ENCODE measurements at regions of chr17 and their contacts with region 1.

Region 1: GRCh38 chr17:75319904-75320691 is 30.9 kb upstream of the SLC25A19 start:
- DNase-seq: no peak
- H3K4me3 ChIP-seq: no peak overlapping the region
- H3K27ac ChIP-seq: no peak overlapping the region
- H3K4me1 ChIP-seq: no peaks in the 10 kb centered on the region
- H3K27me3 ChIP-seq: no peaks in the 10 kb centered on the region
- CTCF ChIP-seq: no peak
- EP300 ChIP-seq: no peak; a peak in 1 of 4 replicates
- RAD21 ChIP-seq: no peak

Region 2: DNA sequence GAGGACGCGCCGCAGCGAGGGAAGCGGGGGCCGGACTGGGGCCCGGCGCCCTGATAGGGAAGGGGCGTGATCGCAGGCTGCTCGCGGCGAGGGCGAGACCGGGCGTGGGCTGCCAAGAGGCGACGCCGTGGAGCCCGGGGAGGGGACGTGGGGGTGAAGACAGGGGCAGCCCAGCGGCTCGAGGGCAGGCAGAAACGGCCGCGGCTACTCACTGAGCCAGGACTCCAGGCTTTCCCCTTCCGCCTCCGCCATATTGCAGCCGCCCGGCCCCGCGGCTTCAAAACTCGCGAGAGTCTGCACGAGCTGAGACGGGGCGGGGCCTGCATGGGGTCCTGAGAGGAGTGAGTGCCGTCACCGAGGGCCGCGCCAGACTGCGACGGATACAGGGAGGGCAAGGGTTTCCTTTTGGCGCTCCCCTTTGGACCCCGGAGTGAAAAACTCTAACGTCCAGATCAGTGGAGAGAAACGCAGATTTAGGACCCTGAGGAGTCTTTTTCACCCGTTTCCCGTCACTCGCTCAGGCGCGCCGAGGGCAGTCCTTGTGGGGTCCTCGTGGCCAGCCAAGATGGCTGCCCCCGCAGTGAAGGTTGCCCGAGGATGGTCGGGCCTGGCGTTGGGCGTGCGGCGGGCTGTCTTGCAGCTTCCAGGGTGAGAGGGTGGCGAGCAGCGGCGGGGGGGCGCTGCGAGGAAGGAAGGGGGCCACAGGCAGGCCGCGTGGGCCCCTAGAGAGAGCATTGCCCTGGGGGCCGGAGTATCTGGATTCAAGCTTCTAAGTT is 58.6 kb before region 1 on chr17 and contains the starts of genes GGA3 and MRPS7:
- CTCF ChIA-PET with region 1: interaction called, 10 read pairs
- POLR2A ChIA-PET with region 1: no interaction called
- DNase-seq: peak; percentile 100
- H3K4me3 ChIP-seq: peak within 1 kb of the TSS; percentile 88 to 99
- H3K27ac ChIP-seq: peak within 1 kb of the TSS; percentile 96 to 98
- H3K4me1 ChIP-seq: peaks cover 4 to 21% of the 10 kb centered on the region in 2 experiments; a peak in 2 of 4 replicates
- H3K27me3 ChIP-seq: no peaks in the 10 kb centered on the region
- CTCF ChIP-seq: no peak
- EP300 ChIP-seq: no peak
- RAD21 ChIP-seq: no peak
- polyA plus RNA-seq, gene GGA3: 42.5 and 43.7 TPM in 2 replicates
- polyA plus RNA-seq, gene MRPS7: 82.8 and 90.4 TPM in 2 replicates

Region 3: DNA sequence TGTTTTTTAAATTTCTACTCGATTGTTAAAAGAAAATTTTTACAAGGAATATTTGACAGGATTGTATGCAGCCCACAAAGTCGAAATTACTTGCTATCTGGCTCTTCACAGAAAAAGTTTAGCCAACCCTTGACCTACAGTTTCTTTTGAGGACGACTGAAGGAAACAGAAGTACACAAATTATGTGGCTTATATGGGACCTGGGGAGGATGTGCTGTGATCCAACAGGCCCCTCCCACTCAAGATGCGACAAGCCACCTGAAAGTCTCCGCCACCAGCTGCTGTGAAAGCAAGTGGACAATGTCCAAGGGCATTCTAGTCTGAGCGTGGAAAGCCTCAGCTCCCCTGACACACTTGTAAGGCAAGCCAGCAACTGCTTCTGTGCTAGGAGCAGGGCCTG is 11.6 kb after region 1 on chr17:
- CTCF ChIA-PET with region 1: interaction called, 56 read pairs
- POLR2A ChIA-PET with region 1: no interaction called
- DNase-seq: no peak
- H3K4me3 ChIP-seq: no peak overlapping the region
- H3K27ac ChIP-seq: no peak overlapping the region
- H3K4me1 ChIP-seq: peaks cover 1 to 2% of the 10 kb centered on the region in 2 experiments; a peak in 2 of 4 replicates
- H3K27me3 ChIP-seq: no peaks in the 10 kb centered on the region
- CTCF ChIP-seq: no peak
- EP300 ChIP-seq: no peak
- RAD21 ChIP-seq: no peak

Region 4: DNA sequence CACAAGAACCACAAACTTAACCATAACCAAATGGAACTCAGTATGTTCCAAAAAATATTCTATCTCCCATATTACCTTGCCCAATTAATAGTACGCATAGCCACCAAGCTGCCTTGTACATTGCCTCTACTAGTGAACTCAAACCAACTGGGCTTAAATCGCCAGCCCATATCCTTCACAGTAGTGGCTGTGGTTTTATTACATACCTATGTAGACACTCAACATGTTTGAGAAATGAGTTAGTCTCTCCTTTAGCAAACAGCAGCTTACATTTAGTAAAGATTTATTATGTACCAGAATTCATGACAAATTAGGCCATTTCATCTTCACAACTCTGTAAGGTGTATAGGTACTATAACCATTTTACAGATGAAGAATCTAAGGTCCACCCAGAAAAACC is 44.0 kb after region 1 on chr17:
- CTCF ChIA-PET with region 1: interaction called, 24 read pairs
- POLR2A ChIA-PET with region 1: no interaction called
- DNase-seq: no peak
- H3K4me3 ChIP-seq: no peak overlapping the region
- H3K27ac ChIP-seq: no peak overlapping the region; a peak in 1 of 4 replicates
- H3K4me1 ChIP-seq: peaks cover 5 to 23% of the 10 kb centered on the region in 2 experiments; a peak in 3 of 4 replicates
- H3K27me3 ChIP-seq: no peaks in the 10 kb centered on the region
- CTCF ChIP-seq: no peak
- EP300 ChIP-seq: no peak; a peak in 1 of 4 replicates
- RAD21 ChIP-seq: no peak

Region 5: DNA sequence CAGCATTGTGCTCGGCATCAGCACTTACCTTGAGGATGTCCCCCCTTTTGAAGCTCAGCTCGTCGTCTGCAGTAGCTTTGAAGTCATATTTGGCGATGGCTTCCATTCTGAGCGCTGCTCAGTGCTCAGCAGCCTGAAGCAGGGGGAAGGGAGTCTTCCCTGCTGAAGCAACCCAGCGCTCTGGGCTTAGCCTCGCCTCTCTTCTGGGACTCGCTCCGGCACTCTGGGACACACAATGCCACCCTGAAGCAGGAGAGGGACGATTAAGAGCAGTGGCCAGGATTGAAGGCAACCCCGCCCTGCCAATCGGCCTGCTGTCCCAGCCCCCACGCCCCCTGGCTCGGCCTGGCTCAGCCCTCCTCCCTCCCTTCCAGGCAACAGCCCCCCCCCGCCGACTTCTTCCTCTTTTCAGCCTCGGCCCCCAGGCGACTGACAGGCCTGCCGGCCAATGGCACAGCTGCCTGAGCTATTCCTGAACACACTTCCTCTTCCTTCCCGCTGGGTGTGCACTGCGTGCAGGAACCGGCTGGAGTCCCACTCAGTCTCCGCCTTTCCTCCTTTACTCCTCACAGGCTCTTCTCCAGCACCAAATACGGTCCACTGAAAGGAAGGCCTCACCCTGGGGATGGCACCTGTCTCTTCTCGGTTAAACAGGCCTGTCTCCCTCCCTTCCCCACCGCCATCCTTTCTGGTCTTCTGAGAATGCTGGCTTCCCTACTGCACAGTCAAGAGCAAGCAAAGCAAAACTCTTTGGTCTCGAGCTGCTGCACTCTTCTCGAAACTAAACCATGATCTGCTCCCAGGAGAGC is 73.6 kb after region 1 on chr17:
- CTCF ChIA-PET with region 1: interaction called, 54 read pairs
- POLR2A ChIA-PET with region 1: interaction called, 7 read pairs
- DNase-seq: peak; percentile 98
- H3K4me3 ChIP-seq: peak overlapping the region; percentile 80 to 99
- H3K27ac ChIP-seq: peak overlapping the region; percentile 71 to 95
- H3K4me1 ChIP-seq: peaks cover 12 to 21% of the 10 kb centered on the region in 2 experiments
- H3K27me3 ChIP-seq: no peaks in the 10 kb centered on the region
- CTCF ChIP-seq: peak; percentile 15; the same call in 1 of the 2 replicates
- EP300 ChIP-seq: peak in 1 of 2 experiments; percentile 45; a peak in 1 of 4 replicates
- RAD21 ChIP-seq: peak; percentile 11; the same call in 1 of the 2 replicates

Region 6: DNA sequence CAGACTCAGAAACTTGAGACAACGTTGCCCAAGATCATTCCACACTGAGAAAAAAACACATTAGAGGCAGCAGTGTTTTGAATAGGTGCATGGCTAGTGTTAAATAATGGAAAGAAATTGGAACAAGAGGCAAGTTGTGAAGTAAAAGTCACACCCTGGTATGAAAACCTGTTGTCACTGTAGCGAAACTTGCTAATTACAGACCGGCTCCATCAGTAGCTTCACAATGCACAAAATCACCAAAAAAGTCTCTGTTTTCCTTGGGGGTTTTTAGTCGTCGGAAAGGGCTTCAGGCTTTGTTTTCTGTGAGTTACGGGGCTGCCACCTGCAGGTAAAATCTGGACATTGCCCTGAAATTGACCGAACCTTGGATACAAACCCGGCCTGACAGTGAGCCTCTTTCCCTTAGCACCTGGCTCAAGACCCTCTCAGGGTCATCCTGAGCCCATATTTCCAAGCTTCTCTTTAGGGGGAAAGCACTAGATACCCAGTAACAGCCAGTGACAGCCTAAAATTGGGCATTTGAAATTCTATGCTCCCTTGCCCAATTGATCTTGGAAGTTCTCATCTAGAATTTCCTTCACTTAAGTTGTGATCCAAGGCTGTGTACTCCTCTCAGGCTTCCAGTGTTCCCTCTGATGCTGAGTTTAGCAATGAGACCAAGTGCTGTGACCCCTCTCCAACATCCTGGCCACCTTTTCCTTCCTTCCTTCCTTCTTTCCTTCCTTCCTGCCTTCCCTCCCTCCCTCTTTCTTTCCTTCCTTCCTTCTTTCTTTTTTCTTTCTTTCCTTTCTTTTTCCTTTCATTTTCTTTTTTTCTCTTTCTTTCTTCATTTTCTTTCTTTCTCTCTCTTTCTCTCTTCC is 92.6 kb after region 1 on chr17:
- CTCF ChIA-PET with region 1: interaction called, 83 read pairs
- POLR2A ChIA-PET with region 1: interaction called, 4 read pairs
- DNase-seq: peak; percentile 81
- H3K4me3 ChIP-seq: peak overlapping the region; percentile 3 to 35; a peak in 3 of 4 replicates
- H3K27ac ChIP-seq: no peak overlapping the region
- H3K4me1 ChIP-seq: no peaks in the 10 kb centered on the region
- H3K27me3 ChIP-seq: peaks cover 22% of the 10 kb centered on the region
- CTCF ChIP-seq: peak; percentile 92
- EP300 ChIP-seq: no peak
- RAD21 ChIP-seq: peak; percentile 96

Region 7: DNA sequence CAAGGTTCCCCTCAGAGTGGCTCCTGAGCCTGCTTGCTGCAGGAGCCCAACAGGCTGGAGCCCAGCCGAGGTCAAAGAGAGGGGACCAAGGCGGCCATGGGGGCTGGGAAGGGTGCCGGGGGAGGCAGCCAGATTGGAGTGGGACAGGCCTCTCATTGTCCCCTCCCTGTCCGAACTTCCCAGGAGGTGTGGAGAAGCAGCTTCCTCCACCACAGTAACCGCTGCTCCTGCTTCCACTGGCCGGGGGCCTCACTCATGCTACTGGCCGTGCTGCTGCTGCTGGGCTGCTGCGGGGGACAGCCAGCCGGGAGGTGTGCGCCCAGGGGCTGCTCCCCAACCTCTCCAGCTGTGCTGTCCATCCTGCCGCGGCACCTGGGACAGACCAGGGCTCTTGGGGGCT is 165.6 kb after region 1 on chr17:
- CTCF ChIA-PET with region 1: no interaction called
- POLR2A ChIA-PET with region 1: no interaction called
- DNase-seq: no peak
- H3K4me3 ChIP-seq: no peak overlapping the region
- H3K27ac ChIP-seq: no peak overlapping the region
- H3K4me1 ChIP-seq: peaks cover 0 to 10% of the 10 kb centered on the region in 2 experiments; a peak in 1 of 4 replicates
- H3K27me3 ChIP-seq: no peaks in the 10 kb centered on the region
- CTCF ChIP-seq: no peak
- EP300 ChIP-seq: no peak
- RAD21 ChIP-seq: no peak